ENCODE measurements at regions of chr11 and their contacts with region 1.

Region 1: DNA sequence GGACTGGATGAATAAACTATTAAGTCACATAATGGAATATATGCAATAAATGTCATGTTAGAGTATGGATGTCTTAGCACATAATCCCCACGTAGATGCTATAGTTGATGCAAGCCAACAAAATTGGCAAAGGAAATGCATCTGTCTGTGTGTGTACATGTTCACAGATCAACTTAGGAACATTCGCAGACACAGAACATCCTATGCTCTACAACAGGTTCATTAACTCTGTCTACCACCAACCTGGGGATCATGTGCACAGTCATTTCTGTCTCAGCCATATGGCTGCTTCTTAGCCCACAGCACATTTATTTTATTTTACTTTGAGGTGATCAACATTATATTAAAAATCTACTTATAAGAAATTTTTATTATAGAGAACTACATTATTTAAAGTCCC is 4.9 kb downstream of the MSANTD4 start:
- DNase-seq: no peak
- ATAC-seq: no peak
- H3K4me3 ChIP-seq: no peak overlapping the region
- H3K27ac ChIP-seq: no peak overlapping the region
- H3K4me1 ChIP-seq: peaks cover 4% of the 10 kb centered on the region; the same call in 1 of the 2 replicates
- H3K27me3 ChIP-seq: no peaks in the 10 kb centered on the region
- CTCF ChIP-seq: no peak
- POLR2A ChIP-seq: no peak
- RAD21 ChIP-seq: no peak

Region 2: GRCh38 chr11:105229257-105229656 is 787.8 kb before region 1 on chr11:
- CTCF ChIA-PET with region 1: no interaction called
- POLR2A ChIA-PET with region 1: no interaction called
- dilution Hi-C with region 1: no loop called
- in situ Hi-C with region 1: no loop called
- intact Hi-C with region 1: no loop called
- DNase-seq: peak; percentile 80
- ATAC-seq: peak; percentile 76
- H3K4me3 ChIP-seq: no peak overlapping the region
- H3K27ac ChIP-seq: no peak overlapping the region; the same call in 1 of the 2 replicates
- H3K4me1 ChIP-seq: peaks cover 8% of the 10 kb centered on the region
- H3K27me3 ChIP-seq: no peaks in the 10 kb centered on the region
- CTCF ChIP-seq: no peak
- POLR2A ChIP-seq: no peak
- RAD21 ChIP-seq: no peak

Region 3: GRCh38 chr11:105910095-105910715 is 106.9 kb before region 1 on chr11:
- CTCF ChIA-PET with region 1: no interaction called
- POLR2A ChIA-PET with region 1: no interaction called
- dilution Hi-C with region 1: no loop called
- in situ Hi-C with region 1: no loop called
- intact Hi-C with region 1: loop called (anchors 5 kb)
- DNase-seq: peak; percentile 77
- ATAC-seq: peak; percentile 85
- H3K4me3 ChIP-seq: no peak overlapping the region
- H3K27ac ChIP-seq: peak overlapping the region; percentile 58; the same call in 1 of the 2 replicates
- H3K4me1 ChIP-seq: peaks cover 2% of the 10 kb centered on the region
- H3K27me3 ChIP-seq: no peaks in the 10 kb centered on the region
- CTCF ChIP-seq: no peak
- POLR2A ChIP-seq: no peak
- RAD21 ChIP-seq: no peak

Region 4: GRCh38 chr11:105949191-105949590 is 67.9 kb before region 1 on chr11:
- CTCF ChIA-PET with region 1: no interaction called
- POLR2A ChIA-PET with region 1: no interaction called
- dilution Hi-C with region 1: no loop called
- in situ Hi-C with region 1: no loop called
- intact Hi-C with region 1: no loop called
- DNase-seq: peak; percentile 20
- ATAC-seq: peak; percentile 53; the same call in 1 of the 2 replicates
- H3K4me3 ChIP-seq: no peak overlapping the region
- H3K27ac ChIP-seq: no peak overlapping the region
- H3K4me1 ChIP-seq: no peaks in the 10 kb centered on the region
- H3K27me3 ChIP-seq: no peaks in the 10 kb centered on the region
- CTCF ChIP-seq: no peak
- POLR2A ChIP-seq: no peak
- RAD21 ChIP-seq: no peak

Region 5: GRCh38 chr11:106063009-106063408 is 45.9 kb after region 1 on chr11:
- CTCF ChIA-PET with region 1: no interaction called
- POLR2A ChIA-PET with region 1: no interaction called
- dilution Hi-C with region 1: no loop called
- in situ Hi-C with region 1: no loop called
- intact Hi-C with region 1: no loop called
- DNase-seq: no peak
- ATAC-seq: no peak
- H3K4me3 ChIP-seq: no peak overlapping the region
- H3K27ac ChIP-seq: no peak overlapping the region
- H3K4me1 ChIP-seq: no peaks in the 10 kb centered on the region
- H3K27me3 ChIP-seq: no peaks in the 10 kb centered on the region
- CTCF ChIP-seq: no peak
- POLR2A ChIP-seq: no peak
- RAD21 ChIP-seq: no peak

Region 6: DNA sequence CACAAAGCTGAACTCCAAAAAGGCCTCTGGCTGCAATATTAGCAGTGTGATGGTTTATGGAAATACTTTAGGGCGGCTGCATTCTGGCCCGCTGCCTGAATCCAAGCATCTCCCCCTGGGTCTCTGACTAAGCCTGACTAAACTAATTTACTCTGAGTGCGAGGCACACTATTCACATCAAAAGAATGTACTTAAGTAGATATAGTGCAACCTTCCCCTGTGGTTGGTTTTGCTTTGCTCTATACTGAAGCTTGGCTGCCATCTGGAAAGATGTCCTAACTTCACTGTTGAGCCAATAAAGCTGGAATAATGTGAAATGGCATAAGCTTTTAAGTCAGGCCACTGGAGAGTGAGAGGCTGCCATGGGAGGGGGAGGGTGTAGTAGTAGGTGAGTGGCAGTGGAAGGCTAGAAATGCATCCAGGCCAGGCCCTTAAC is 382.0 kb after region 1 on chr11:
- CTCF ChIA-PET with region 1: no interaction called
- POLR2A ChIA-PET with region 1: no interaction called
- dilution Hi-C with region 1: no loop called
- in situ Hi-C with region 1: no loop called
- intact Hi-C with region 1: no loop called
- DNase-seq: peak; percentile 100
- ATAC-seq: peak; percentile 96
- H3K4me3 ChIP-seq: no peak overlapping the region
- H3K27ac ChIP-seq: peak overlapping the region; percentile 90
- H3K4me1 ChIP-seq: peaks cover 15% of the 10 kb centered on the region
- H3K27me3 ChIP-seq: no peaks in the 10 kb centered on the region
- CTCF ChIP-seq: no peak
- POLR2A ChIP-seq: 0 out of 2 replicates have a peak, but pooled peaks have one; percentile 17
- RAD21 ChIP-seq: no peak; the same call in 1 of the 2 replicates